GM12878 (cell line): ENCODE measurements at regions of chrX and their contacts with region 1.

Region 1: DNA sequence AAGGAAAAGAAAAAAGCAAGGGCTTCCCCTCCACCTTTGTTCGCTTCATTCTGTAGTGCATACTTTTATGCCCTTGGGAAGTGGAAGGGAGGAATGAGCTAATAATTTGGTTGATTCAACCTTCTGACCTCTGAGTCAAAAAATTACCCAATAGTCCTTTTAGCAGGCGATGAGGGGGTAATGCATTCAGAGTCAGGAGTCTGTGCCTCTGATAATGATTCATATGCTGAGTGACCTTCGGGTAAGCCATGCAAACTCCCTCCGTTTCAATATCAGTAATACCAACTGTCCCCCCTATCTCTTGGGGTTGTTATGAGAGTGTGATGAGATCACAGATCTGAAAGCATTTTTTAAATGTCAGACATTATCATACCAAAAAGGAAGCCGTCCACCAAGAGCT is 41.6 kb upstream of the ACSL4 start:
- DNase-seq: peak; percentile 50
- ATAC-seq: peak; percentile 97
- H3K4me3 ChIP-seq: no peak overlapping the region
- H3K27ac ChIP-seq: 0 out of 2 replicates have a peak overlapping the region, but pooled peaks have one; percentile 12
- H3K4me1 ChIP-seq: peaks cover 6% of the 10 kb centered on the region; the same call in 1 of the 2 replicates
- H3K27me3 ChIP-seq: no peaks in the 10 kb centered on the region
- CTCF ChIP-seq: no peak
- EP300 ChIP-seq: peak; percentile 64 to 85; a peak in 2 of 4 replicates
- POLR2A ChIP-seq: no peak
- RAD21 ChIP-seq: no peak

Region 2: GRCh38 chrX:109660435-109661143 is 114.1 kb before region 1 on chrX:
- CTCF ChIA-PET with region 1: no interaction called
- POLR2A ChIA-PET with region 1: no interaction called
- RAD21 ChIA-PET with region 1: no interaction called
- SMC1A ChIA-PET with region 1: no interaction called
- in situ Hi-C with region 1: no loop called
- intact Hi-C with region 1: no loop called
- DNase-seq: no peak
- ATAC-seq: no peak
- H3K4me3 ChIP-seq: no peak overlapping the region
- H3K27ac ChIP-seq: no peak overlapping the region
- H3K4me1 ChIP-seq: no peaks in the 10 kb centered on the region
- H3K27me3 ChIP-seq: no peaks in the 10 kb centered on the region
- CTCF ChIP-seq: no peak
- EP300 ChIP-seq: no peak
- POLR2A ChIP-seq: no peak
- RAD21 ChIP-seq: no peak

Region 3: GRCh38 chrX:109720947-109721346 is 53.8 kb before region 1 on chrX:
- CTCF ChIA-PET with region 1: no interaction called
- POLR2A ChIA-PET with region 1: interaction called, 7 read pairs
- RAD21 ChIA-PET with region 1: interaction called, 3 read pairs
- SMC1A ChIA-PET with region 1: interaction called, 15 read pairs
- in situ Hi-C with region 1: no loop called
- intact Hi-C with region 1: no loop called
- DNase-seq: no peak
- ATAC-seq: peak; percentile 31
- H3K4me3 ChIP-seq: no peak overlapping the region
- H3K27ac ChIP-seq: no peak overlapping the region; the same call in 1 of the 2 replicates
- H3K4me1 ChIP-seq: peaks cover 10% of the 10 kb centered on the region
- H3K27me3 ChIP-seq: no peaks in the 10 kb centered on the region
- CTCF ChIP-seq: no peak
- EP300 ChIP-seq: no peak
- POLR2A ChIP-seq: no peak
- RAD21 ChIP-seq: no peak

Region 4: DNA sequence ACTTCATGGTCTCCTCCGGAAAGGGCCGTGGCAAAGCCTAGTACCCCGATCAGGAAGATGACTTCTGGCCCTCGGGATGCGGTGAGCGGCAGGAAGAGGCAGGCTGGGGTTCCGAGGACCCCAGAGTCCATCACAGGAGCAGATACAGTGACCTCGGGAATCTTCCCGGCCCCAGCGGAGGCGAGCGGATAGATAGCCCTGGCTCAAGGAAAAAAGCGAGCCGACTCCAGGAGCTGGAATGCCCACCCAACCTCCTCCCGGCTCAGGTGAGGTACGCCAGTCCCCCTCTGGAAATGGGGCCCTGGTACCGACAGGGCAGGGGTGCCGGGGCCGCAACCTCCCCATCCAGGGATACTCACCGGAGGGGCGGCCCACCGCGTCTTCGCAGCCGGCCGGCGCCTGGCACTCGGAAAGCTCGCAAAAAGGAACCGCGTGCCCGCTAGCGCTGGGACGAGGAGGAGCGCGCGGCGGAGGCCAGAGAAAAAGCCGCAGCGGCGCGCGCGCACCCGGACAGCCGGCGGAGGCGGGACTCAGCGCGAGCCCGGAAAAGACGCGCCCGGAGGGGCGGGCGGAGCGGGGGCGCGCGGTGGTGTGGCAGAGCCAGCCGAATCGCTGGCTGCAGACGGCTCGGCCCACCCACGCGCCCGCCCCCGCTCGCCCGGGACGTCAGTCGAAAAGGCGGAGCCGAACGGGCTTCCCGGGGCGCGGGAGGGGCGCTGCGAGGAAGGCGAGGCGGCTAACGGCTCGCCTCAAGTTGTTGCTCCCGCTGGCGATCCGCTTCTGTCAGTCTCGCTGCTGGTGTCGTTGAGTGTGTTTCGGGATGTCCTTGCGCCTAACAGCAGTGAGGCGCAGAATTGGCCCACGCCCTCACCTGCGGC is 41.7 kb before region 1 on chrX and contains the start of gene ACSL4:
- CTCF ChIA-PET with region 1: interaction called, 16 read pairs
- POLR2A ChIA-PET with region 1: interaction called, 3 read pairs
- RAD21 ChIA-PET with region 1: interaction called, 25 read pairs
- SMC1A ChIA-PET with region 1: interaction called, 14 read pairs
- in situ Hi-C with region 1: no loop called
- intact Hi-C with region 1: loop called (anchors 1 kb)
- DNase-seq: no peak
- ATAC-seq: peak; percentile 91
- H3K4me3 ChIP-seq: peak within 1 kb of the TSS; percentile 69
- H3K27ac ChIP-seq: peak within 1 kb of the TSS; percentile 88
- H3K4me1 ChIP-seq: no peaks in the 10 kb centered on the region
- H3K27me3 ChIP-seq: no peaks in the 10 kb centered on the region
- CTCF ChIP-seq: no peak
- EP300 ChIP-seq: no peak
- POLR2A ChIP-seq: peak; percentile 84
- RAD21 ChIP-seq: no peak
- polyA plus RNA-seq, gene ACSL4: 20.7 to 23.6 TPM

Region 5: GRCh38 chrX:109760241-109760922 is 14.3 kb before region 1 on chrX:
- CTCF ChIA-PET with region 1: interaction called, 4 read pairs
- POLR2A ChIA-PET with region 1: no interaction called
- RAD21 ChIA-PET with region 1: interaction called, 5 read pairs
- SMC1A ChIA-PET with region 1: interaction called, 12 read pairs
- in situ Hi-C with region 1: no loop called
- intact Hi-C with region 1: no loop called
- DNase-seq: no peak
- ATAC-seq: no peak
- H3K4me3 ChIP-seq: no peak overlapping the region
- H3K27ac ChIP-seq: no peak overlapping the region
- H3K4me1 ChIP-seq: no peaks in the 10 kb centered on the region
- H3K27me3 ChIP-seq: no peaks in the 10 kb centered on the region; a peak in 1 of 4 replicates
- CTCF ChIP-seq: no peak
- EP300 ChIP-seq: no peak
- POLR2A ChIP-seq: no peak
- RAD21 ChIP-seq: no peak

Region 6: DNA sequence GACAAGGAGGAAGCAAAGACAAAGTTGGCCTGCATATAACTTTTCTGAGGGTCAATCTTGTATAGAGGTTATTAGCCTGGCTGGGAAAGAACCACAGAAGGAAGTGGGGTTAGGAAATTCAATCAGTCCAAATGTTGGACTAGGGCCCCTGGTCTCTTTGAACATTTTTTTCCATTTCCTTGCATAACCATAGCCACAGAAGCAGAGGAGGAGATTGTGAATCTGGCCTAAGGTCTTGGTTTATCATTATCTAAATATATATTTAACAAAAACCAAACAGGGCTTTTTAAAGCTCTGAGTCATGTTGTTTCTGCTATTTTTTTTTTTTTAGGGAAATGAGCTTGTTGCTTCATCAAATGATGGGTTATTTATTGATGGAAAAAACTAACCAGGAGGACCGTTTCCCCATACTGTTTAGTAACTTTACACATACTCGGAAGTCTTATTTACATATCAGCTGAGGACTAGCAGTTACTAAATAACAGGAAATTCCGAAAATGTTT is 56.0 kb after region 1 on chrX:
- CTCF ChIA-PET with region 1: interaction called, 4 read pairs
- POLR2A ChIA-PET with region 1: no interaction called
- RAD21 ChIA-PET with region 1: interaction called, 10 read pairs
- SMC1A ChIA-PET with region 1: interaction called, 6 read pairs
- in situ Hi-C with region 1: no loop called
- intact Hi-C with region 1: no loop called
- DNase-seq: no peak
- ATAC-seq: peak; percentile 80
- H3K4me3 ChIP-seq: no peak overlapping the region
- H3K27ac ChIP-seq: no peak overlapping the region
- H3K4me1 ChIP-seq: no peaks in the 10 kb centered on the region
- H3K27me3 ChIP-seq: no peaks in the 10 kb centered on the region
- CTCF ChIP-seq: no peak
- EP300 ChIP-seq: no peak
- POLR2A ChIP-seq: no peak
- RAD21 ChIP-seq: no peak

Region 7: DNA sequence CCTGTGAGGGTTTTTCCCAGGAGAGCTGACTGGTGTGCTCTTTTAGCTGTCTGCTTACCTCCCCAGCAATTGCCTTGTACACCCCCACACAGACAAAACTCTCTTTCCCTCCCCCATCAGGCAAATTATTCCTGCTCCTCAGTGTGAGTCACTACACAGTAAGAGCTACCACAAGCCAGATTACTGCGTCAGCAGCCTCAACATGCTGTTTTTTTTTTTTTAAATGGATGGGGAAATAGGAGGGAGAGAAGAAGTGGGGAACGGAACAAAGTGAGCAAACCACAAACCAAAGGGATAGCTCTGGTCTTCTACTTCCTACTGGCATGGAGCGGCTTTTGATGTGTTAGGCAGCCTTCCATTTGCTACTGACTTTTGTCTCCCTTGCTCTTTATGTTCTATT is 65.9 kb after region 1 on chrX:
- CTCF ChIA-PET with region 1: interaction called, 4 read pairs
- POLR2A ChIA-PET with region 1: interaction called, 4 read pairs
- RAD21 ChIA-PET with region 1: interaction called, 4 read pairs
- SMC1A ChIA-PET with region 1: interaction called, 44 read pairs
- in situ Hi-C with region 1: no loop called
- intact Hi-C with region 1: no loop called
- DNase-seq: no peak
- ATAC-seq: peak; percentile 36
- H3K4me3 ChIP-seq: no peak overlapping the region
- H3K27ac ChIP-seq: no peak overlapping the region
- H3K4me1 ChIP-seq: peaks cover 6% of the 10 kb centered on the region; the same call in 1 of the 2 replicates
- H3K27me3 ChIP-seq: no peaks in the 10 kb centered on the region
- CTCF ChIP-seq: no peak
- EP300 ChIP-seq: no peak
- POLR2A ChIP-seq: no peak
- RAD21 ChIP-seq: no peak

Region 8: DNA sequence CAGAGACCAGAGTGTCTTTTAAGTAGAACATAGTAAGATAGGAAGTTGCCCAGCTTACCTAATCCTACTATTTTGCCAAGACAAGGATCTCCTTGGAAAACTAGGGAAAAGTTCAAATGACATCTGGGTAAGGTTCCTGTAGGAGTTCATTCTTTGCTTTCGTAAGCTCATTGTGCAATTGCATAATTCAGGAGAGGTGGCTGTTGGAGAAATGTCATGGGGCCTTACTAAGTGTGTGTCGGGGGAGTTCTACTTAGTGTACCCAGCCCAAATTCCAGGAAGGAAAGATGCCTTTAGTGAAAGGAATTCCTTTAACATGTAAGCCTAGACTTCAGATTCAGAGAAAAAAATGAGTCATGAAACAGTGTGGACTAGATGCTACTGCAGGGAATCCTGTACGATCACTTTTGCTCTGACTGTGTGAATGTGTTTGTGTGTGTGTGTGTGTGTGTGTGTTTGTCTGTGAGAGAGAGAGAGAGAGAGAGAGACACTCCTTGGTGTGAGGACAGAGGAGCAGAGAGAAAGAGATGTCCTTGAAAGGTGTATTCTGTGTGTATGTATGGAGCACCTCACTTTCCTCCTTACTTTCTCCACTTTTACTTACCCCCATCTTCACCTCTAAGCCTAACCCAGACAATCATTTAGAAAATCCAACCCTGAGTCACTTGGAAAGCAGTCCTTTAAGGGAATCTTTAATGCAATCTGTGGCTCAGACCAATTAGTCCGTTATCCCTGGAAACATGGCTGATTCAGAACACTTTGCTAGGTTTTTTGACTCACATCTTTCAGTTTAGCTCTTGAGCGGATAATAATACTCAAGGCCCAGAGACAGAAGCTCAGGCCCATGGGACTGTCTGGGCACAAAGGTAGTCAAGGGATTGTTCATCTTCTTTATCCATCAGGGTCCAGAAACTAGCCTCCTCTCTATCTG is 72.8 kb after region 1 on chrX:
- CTCF ChIA-PET with region 1: interaction called, 4 read pairs
- POLR2A ChIA-PET with region 1: interaction called, 4 read pairs
- RAD21 ChIA-PET with region 1: interaction called, 27 read pairs
- SMC1A ChIA-PET with region 1: interaction called, 44 read pairs
- in situ Hi-C with region 1: no loop called
- intact Hi-C with region 1: loop called (anchors 2 kb)
- DNase-seq: no peak
- ATAC-seq: no peak
- H3K4me3 ChIP-seq: no peak overlapping the region
- H3K27ac ChIP-seq: no peak overlapping the region
- H3K4me1 ChIP-seq: peaks cover 9% of the 10 kb centered on the region
- H3K27me3 ChIP-seq: no peaks in the 10 kb centered on the region
- CTCF ChIP-seq: no peak
- EP300 ChIP-seq: no peak
- POLR2A ChIP-seq: no peak
- RAD21 ChIP-seq: no peak

Region 9: DNA sequence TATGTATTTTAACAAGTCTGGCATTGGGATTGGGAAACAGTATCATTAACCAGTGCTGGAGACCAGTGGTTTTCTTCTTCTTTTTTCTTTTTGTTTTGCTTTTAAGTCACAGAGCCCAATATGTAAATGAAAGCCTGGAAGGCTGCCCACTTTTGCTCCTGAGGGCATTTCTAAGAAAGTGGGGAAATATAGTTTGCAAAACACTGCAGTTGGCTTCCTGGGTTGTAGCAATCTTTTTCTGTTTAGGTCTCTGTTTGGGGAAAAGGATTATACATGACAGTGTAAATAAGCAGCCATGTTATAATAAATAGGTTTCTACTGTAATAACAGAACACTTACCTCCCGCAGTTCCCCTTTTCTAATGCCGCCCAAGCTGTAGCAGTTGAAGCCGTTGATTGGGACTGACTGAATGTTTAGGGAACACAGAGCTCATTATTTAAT is 333.7 kb after region 1 on chrX:
- CTCF ChIA-PET with region 1: no interaction called
- POLR2A ChIA-PET with region 1: no interaction called
- RAD21 ChIA-PET with region 1: no interaction called
- SMC1A ChIA-PET with region 1: no interaction called
- in situ Hi-C with region 1: no loop called
- intact Hi-C with region 1: no loop called
- DNase-seq: no peak
- ATAC-seq: no peak
- H3K4me3 ChIP-seq: no peak overlapping the region
- H3K27ac ChIP-seq: no peak overlapping the region
- H3K4me1 ChIP-seq: no peaks in the 10 kb centered on the region
- H3K27me3 ChIP-seq: no peaks in the 10 kb centered on the region
- CTCF ChIP-seq: no peak
- EP300 ChIP-seq: no peak
- POLR2A ChIP-seq: no peak
- RAD21 ChIP-seq: no peak